ENCODE measurements at regions of chr1 and their contacts with region 1.

Region 1: GRCh38 chr1:243325305-243325890 is 69.6 kb downstream of the SDCCAG8 start:
- DNase-seq: peak in 1 of 2 donors; percentile 75
- ATAC-seq: peak; percentile 50 to 74 (median 67)
- H3K4me3 ChIP-seq: no peak overlapping the region
- H3K4me3 Mint-ChIP-seq: no peak overlapping the region
- H3K27ac ChIP-seq: no peak overlapping the region
- H3K27ac Mint-ChIP-seq: no peak overlapping the region
- H3K4me1 ChIP-seq: no peaks in the 10 kb centered on the region
- H3K4me1 Mint-ChIP-seq: no peaks in the 10 kb centered on the region
- H3K27me3 ChIP-seq: no peaks in the 10 kb centered on the region
- H3K27me3 Mint-ChIP-seq: no peaks in the 10 kb centered on the region
- CTCF ChIP-seq: peak; percentile 89

Region 2: DNA sequence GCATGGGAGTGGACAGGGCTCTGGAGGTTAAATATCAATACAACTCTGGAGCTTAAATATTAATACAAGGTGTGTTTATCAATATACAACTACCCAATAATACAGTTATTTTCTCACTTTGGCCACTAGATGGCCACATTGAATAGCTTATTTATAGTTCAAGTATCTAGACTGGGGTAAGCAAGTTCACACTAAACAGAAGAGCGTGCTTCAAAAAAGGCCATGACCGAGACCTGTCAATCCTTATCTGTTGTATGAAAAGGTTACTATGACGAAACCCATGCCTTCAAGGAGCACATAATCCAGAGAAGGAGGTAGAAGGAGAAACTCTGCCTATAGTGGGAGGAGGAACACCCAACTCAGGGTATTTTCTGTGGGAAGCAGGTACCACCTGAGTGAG is 1714.3 kb before region 1 on chr1:
- intact Hi-C with region 1: loop called (anchors 5 kb)
- DNase-seq: peak in 1 of 2 donors; percentile 77
- ATAC-seq: peak; percentile 72 to 85 (median 72)
- H3K4me3 ChIP-seq: no peak overlapping the region
- H3K4me3 Mint-ChIP-seq: no peak overlapping the region
- H3K27ac ChIP-seq: no peak overlapping the region
- H3K27ac Mint-ChIP-seq: no peak overlapping the region
- H3K4me1 ChIP-seq: no peaks in the 10 kb centered on the region
- H3K4me1 Mint-ChIP-seq: no peaks in the 10 kb centered on the region
- H3K27me3 ChIP-seq: no peaks in the 10 kb centered on the region
- H3K27me3 Mint-ChIP-seq: no peaks in the 10 kb centered on the region
- CTCF ChIP-seq: peak; percentile 71

Region 3: GRCh38 chr1:242023805-242024204 is 1301.6 kb before region 1 on chr1:
- intact Hi-C with region 1: loop called (anchors 10 kb)
- DNase-seq: no peak
- ATAC-seq: no peak
- H3K4me3 ChIP-seq: no peak overlapping the region
- H3K4me3 Mint-ChIP-seq: no peak overlapping the region
- H3K27ac ChIP-seq: no peak overlapping the region
- H3K27ac Mint-ChIP-seq: no peak overlapping the region
- H3K4me1 ChIP-seq: no peaks in the 10 kb centered on the region
- H3K4me1 Mint-ChIP-seq: no peaks in the 10 kb centered on the region
- H3K27me3 ChIP-seq: no peaks in the 10 kb centered on the region
- H3K27me3 Mint-ChIP-seq: no peaks in the 10 kb centered on the region
- CTCF ChIP-seq: no peak

Region 4: DNA sequence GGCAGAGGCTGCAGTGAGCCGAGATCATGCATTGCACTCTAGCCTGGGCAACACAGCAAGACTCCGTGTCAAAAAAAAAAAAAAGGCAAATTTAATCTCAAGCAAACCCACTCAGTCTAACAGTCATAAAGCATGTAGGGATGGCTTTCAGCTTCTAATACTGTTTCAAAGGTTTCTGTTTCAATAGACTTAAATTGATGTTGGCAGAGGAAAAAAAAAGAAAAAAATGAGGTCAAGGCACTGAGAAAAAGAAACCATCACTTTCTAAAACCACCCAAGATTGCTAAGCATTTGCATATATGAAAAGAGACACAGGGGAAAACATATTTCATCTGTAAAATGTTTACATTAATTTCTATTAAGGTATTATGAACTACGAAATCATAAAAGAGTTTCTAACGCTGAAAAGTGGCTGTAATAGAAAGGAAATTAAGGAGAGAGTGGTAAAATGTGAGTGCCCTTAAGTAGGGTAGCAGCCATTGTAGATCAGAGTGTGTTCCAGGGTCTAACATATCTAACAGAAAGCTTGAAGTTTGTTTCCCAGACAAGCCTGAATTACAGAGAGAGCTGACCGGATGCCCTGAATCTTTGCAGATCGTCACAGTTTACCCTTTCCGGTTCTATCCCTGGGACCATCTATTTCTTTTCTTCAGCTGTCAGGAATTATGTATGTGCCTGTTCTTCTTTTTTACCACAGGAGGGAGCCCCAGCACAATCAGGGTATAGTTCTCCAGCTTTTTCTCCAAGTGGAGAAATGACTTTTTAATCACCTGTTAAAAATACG is 870.9 kb before region 1 on chr1:
- intact Hi-C with region 1: loop called (anchors 5 kb)
- DNase-seq: peak in 1 of 2 donors; percentile 24
- ATAC-seq: no peak
- H3K4me3 ChIP-seq: no peak overlapping the region
- H3K4me3 Mint-ChIP-seq: no peak overlapping the region
- H3K27ac ChIP-seq: no peak overlapping the region
- H3K27ac Mint-ChIP-seq: no peak overlapping the region
- H3K4me1 ChIP-seq: no peaks in the 10 kb centered on the region
- H3K4me1 Mint-ChIP-seq: no peaks in the 10 kb centered on the region
- H3K27me3 ChIP-seq: no peaks in the 10 kb centered on the region
- H3K27me3 Mint-ChIP-seq: peaks cover 4 to 7% of the 10 kb centered on the region in 2 donors
- CTCF ChIP-seq: no peak

Region 5: GRCh38 chr1:243364866-243365265 is 39.5 kb after region 1 on chr1:
- intact Hi-C with region 1: no loop called
- DNase-seq: no peak
- ATAC-seq: no peak
- H3K4me3 ChIP-seq: no peak overlapping the region
- H3K4me3 Mint-ChIP-seq: no peak overlapping the region
- H3K27ac ChIP-seq: no peak overlapping the region
- H3K27ac Mint-ChIP-seq: no peak overlapping the region
- H3K4me1 ChIP-seq: no peaks in the 10 kb centered on the region
- H3K4me1 Mint-ChIP-seq: no peaks in the 10 kb centered on the region
- H3K27me3 ChIP-seq: no peaks in the 10 kb centered on the region
- H3K27me3 Mint-ChIP-seq: no peaks in the 10 kb centered on the region
- CTCF ChIP-seq: no peak

Measured in natural killer cell (primary cell).